ENCODE measurements at regions of chr11 and their contacts with region 1.

Region 1: GRCh38 chr11:45846974-45847910 is at the start of gene CRY2:
- DNase-seq: peak; percentile 81
- H3K4me3 ChIP-seq: peak within 1 kb of the TSS; percentile 93
- H3K27me3 ChIP-seq: no peaks in the 10 kb centered on the region
- CTCF ChIP-seq: no peak
- polyA plus RNA-seq, gene CRY2: 12.1 and 16.7 TPM in 2 replicates

Region 2: GRCh38 chr11:45578316-45578715 is 268.9 kb before region 1 on chr11:
- CTCF ChIA-PET with region 1: no interaction called
- POLR2A ChIA-PET with region 1: no interaction called
- DNase-seq: no peak
- H3K4me3 ChIP-seq: no peak overlapping the region
- H3K27me3 ChIP-seq: peaks cover 1% of the 10 kb centered on the region; the same call in 1 of the 2 replicates
- CTCF ChIP-seq: no peak

Region 3: GRCh38 chr11:45834298-45834756 is 12.9 kb before region 1 on chr11:
- CTCF ChIA-PET with region 1: interaction called, 12 read pairs
- POLR2A ChIA-PET with region 1: interaction called, 9 read pairs
- DNase-seq: no peak
- H3K4me3 ChIP-seq: no peak overlapping the region
- H3K27me3 ChIP-seq: peaks cover 3% of the 10 kb centered on the region; the same call in 1 of the 2 replicates
- CTCF ChIP-seq: no peak

Region 4: GRCh38 chr11:45859661-45860140 is 12.5 kb after region 1 on chr11:
- CTCF ChIA-PET with region 1: interaction called, 10 read pairs
- POLR2A ChIA-PET with region 1: interaction called, 4 read pairs
- DNase-seq: peak; percentile 98
- H3K4me3 ChIP-seq: no peak overlapping the region
- H3K27me3 ChIP-seq: no peaks in the 10 kb centered on the region
- CTCF ChIP-seq: no peak

Region 5: DNA sequence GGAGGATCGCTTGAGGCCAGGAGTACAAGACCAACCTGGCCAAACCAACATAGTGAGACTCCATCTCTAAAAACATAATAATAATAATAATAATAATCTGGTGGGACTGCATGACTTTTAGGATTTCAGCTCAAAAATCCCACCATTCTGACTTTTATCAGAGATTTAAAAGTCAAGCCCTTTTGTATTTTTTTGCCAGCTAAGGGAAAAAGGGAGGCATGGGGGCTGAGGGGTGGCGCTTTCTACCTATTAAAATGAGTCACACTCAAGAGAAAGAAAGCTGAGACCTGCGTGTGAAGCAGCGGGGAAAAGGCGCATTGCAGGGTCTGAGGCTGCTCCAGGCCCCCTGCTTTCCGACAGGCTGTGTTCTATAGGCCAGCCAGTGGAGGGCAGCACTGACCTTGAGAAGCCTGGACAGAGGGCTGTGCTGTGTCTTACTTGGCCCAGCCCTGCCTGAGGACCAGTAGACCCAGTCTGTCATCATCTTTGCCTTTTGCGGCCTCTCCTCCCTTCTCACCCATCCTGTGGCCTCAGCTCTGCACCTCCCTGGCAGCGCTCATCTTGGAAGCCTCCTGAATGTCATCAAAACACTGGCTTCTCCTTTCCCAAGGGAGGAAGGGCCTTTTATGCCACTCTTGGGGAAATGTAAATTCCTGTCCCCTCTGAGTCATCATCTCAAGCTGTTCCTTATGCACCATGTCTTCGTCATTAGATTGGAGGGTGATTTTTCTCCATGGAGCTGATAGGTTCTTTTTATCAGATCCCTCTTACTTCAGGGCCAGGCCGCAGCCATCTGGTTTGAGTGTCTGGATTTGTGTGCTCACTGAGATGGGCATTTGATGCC is 25.5 kb after region 1 on chr11:
- CTCF ChIA-PET with region 1: interaction called, 12 read pairs
- POLR2A ChIA-PET with region 1: interaction called, 3 read pairs
- DNase-seq: peak; percentile 84
- H3K4me3 ChIP-seq: no peak overlapping the region
- H3K27me3 ChIP-seq: no peaks in the 10 kb centered on the region
- CTCF ChIP-seq: peak; percentile 84